ENCODE measurements at regions of chr1 and their contacts with region 1.

Region 1: GRCh38 chr1:31576201-31576669 is at the start of gene TINAGL1:
- DNase-seq: peak; percentile 89 to 98
- H3K4me3 ChIP-seq: peak within 1 kb of the TSS; percentile 70
- H3K27ac ChIP-seq: peak within 1 kb of the TSS; percentile 91
- H3K4me1 ChIP-seq: peaks cover 72% of the 10 kb centered on the region
- H3K27me3 ChIP-seq: no peaks in the 10 kb centered on the region
- CTCF ChIP-seq: no peak
- total RNA-seq, gene TINAGL1: 162 and 191 TPM in 2 replicates

Region 2: GRCh38 chr1:31587720-31588394 is 11.6 kb after region 1 on chr1:
- CTCF ChIA-PET with region 1: no interaction called
- POLR2A ChIA-PET with region 1: interaction called, 3 read pairs
- intact Hi-C with region 1: loop called (anchors 1 kb)
- DNase-seq: peak; percentile 84 to 95
- H3K4me3 ChIP-seq: peak overlapping the region; percentile 52; the same call in 1 of the 2 replicates
- H3K27ac ChIP-seq: peak overlapping the region; percentile 92
- H3K4me1 ChIP-seq: peaks cover 97% of the 10 kb centered on the region
- H3K27me3 ChIP-seq: no peaks in the 10 kb centered on the region
- CTCF ChIP-seq: peak; percentile 90

Region 3: GRCh38 chr1:31938174-31938950 is 362.1 kb after region 1 on chr1 and contains the start of gene PTP4A2:
- CTCF ChIA-PET with region 1: no interaction called
- POLR2A ChIA-PET with region 1: no interaction called
- intact Hi-C with region 1: loop called (anchors 10 kb)
- DNase-seq: peak; percentile 96 to 97
- H3K4me3 ChIP-seq: peak within 1 kb of the TSS; percentile 86
- H3K27ac ChIP-seq: peak within 1 kb of the TSS; percentile 95
- H3K4me1 ChIP-seq: peaks cover 78% of the 10 kb centered on the region
- H3K27me3 ChIP-seq: no peaks in the 10 kb centered on the region
- CTCF ChIP-seq: no peak; the same call in 1 of the 2 replicates
- total RNA-seq, gene PTP4A2: 149 and 201 TPM in 2 replicates

Measured in PC-9 (cell line).